ENCODE measurements at regions of chr4 and their contacts with region 1.

Region 1: GRCh38 chr4:76977736-76978350 is 28.3 kb downstream of the SEPTIN11 start:
- DNase-seq: peak in 1 of 9 donors; percentile 25
- ATAC-seq: peak; percentile 45
- H3K4me3 ChIP-seq: no peak overlapping the region
- H3K4me3 Mint-ChIP-seq: peak overlapping the region in 6 of 10 donors; percentile 7 to 58 (median 15)
- H3K27ac ChIP-seq: no peak overlapping the region
- H3K27ac Mint-ChIP-seq: peak overlapping the region in 2 of 9 donors; percentile 9 to 74
- H3K4me1 ChIP-seq: peaks cover 11 to 17% of the 10 kb centered on the region in 2 donors
- H3K4me1 Mint-ChIP-seq: peaks cover 22 to 69% (median 53%) of the 10 kb centered on the region in 7 donors
- H3K27me3 ChIP-seq: no peaks in the 10 kb centered on the region
- H3K27me3 Mint-ChIP-seq: peaks cover 0 to 36% (median 0%) of the 10 kb centered on the region in 5 donors

Region 2: DNA sequence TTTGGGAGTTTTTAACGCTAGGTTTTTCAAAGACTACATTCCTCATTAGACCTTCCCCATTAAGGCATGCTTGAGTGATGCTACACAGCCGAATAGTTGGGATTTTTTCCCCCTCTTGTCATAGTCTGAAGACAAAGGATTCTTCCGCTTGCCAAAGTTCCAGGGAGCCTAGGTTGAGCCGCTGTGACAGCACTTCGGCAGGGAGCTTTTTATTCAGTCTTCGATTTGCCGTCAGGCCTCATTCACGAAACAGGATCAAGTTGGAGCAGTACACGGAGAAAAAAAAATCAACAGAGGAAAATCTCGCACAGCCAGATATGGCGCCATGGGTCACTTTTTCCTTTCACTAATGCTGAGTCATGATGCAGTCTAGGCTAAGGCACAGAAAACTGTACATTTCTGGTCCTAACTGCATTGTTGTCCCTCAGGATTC is 518.5 kb before region 1 on chr4:
- CTCF ChIA-PET with region 1: no interaction called
- POLR2A ChIA-PET with region 1: no interaction called
- intact Hi-C with region 1: no loop called
- DNase-seq: no peak
- ATAC-seq: no peak
- H3K4me3 ChIP-seq: no peak overlapping the region
- H3K4me3 Mint-ChIP-seq: no peak overlapping the region
- H3K27ac ChIP-seq: no peak overlapping the region
- H3K27ac Mint-ChIP-seq: no peak overlapping the region
- H3K4me1 ChIP-seq: no peaks in the 10 kb centered on the region
- H3K4me1 Mint-ChIP-seq: no peaks in the 10 kb centered on the region
- H3K27me3 ChIP-seq: peaks cover 0 to 5% of the 10 kb centered on the region in 2 donors
- H3K27me3 Mint-ChIP-seq: peaks cover 2 to 14% (median 8%) of the 10 kb centered on the region in 5 donors

Region 3: GRCh38 chr4:76960014-76960413 is 17.8 kb before region 1 on chr4:
- CTCF ChIA-PET with region 1: no interaction called
- POLR2A ChIA-PET with region 1: interaction called, 5 read pairs
- intact Hi-C with region 1: loop called in 1 of 2 experiments (anchors 2 kb)
- DNase-seq: no peak
- ATAC-seq: no peak
- H3K4me3 ChIP-seq: no peak overlapping the region
- H3K4me3 Mint-ChIP-seq: no peak overlapping the region
- H3K27ac ChIP-seq: no peak overlapping the region
- H3K27ac Mint-ChIP-seq: no peak overlapping the region
- H3K4me1 ChIP-seq: no peaks in the 10 kb centered on the region
- H3K4me1 Mint-ChIP-seq: peaks cover 3 to 27% (median 17%) of the 10 kb centered on the region in 7 donors
- H3K27me3 ChIP-seq: no peaks in the 10 kb centered on the region
- H3K27me3 Mint-ChIP-seq: peaks cover 0 to 41% (median 0%) of the 10 kb centered on the region in 5 donors

Measured in naive thymus-derived CD4-positive, alpha-beta T cell (primary cell).